Mammary epithelial cell (primary cell): ENCODE measurements at regions of chr1 and their contacts with region 1.

Region 1: GRCh38 chr1:209926045-209926444 is 12.0 kb upstream of the SYT14 start:
- DNase-seq: peak; percentile 79
- H3K4me3 ChIP-seq: no peak overlapping the region
- H3K27ac ChIP-seq: no peak overlapping the region
- H3K4me1 ChIP-seq: peaks cover 8% of the 10 kb centered on the region
- H3K27me3 ChIP-seq: no peaks in the 10 kb centered on the region
- CTCF ChIP-seq: no peak

Region 2: GRCh38 chr1:209875515-209875914 is 50.5 kb before region 1 on chr1:
- CTCF ChIA-PET with region 1: no interaction called
- dilution Hi-C with region 1: no loop called
- in situ Hi-C with region 1: loop called in 1 of 2 experiments (anchors 10 kb)
- intact Hi-C with region 1: no loop called
- DNase-seq: peak; percentile 69
- H3K4me3 ChIP-seq: no peak overlapping the region
- H3K27ac ChIP-seq: peak overlapping the region; percentile 99
- H3K4me1 ChIP-seq: peaks cover 78% of the 10 kb centered on the region
- H3K27me3 ChIP-seq: no peaks in the 10 kb centered on the region
- CTCF ChIP-seq: peak; percentile 57 to 63